Natural killer cell (primary cell): ENCODE measurements at regions of chr19 and their contacts with region 1.

Region 1: GRCh38 chr19:18192673-18193387 is at the start of gene MPV17L2:
- DNase-seq: peak; percentile 97 to 100
- ATAC-seq: peak; percentile 85 to 95 (median 86)
- H3K4me3 ChIP-seq: peak within 1 kb of the TSS; percentile 73
- H3K4me3 Mint-ChIP-seq: peak within 1 kb of the TSS; percentile 86
- H3K27ac ChIP-seq: peak within 1 kb of the TSS; percentile 83
- H3K27ac Mint-ChIP-seq: peak within 1 kb of the TSS; percentile 94 to 96
- H3K4me1 ChIP-seq: peaks cover 27% of the 10 kb centered on the region
- H3K4me1 Mint-ChIP-seq: peaks cover 26 to 29% of the 10 kb centered on the region in 2 donors
- H3K27me3 ChIP-seq: no peaks in the 10 kb centered on the region
- H3K27me3 Mint-ChIP-seq: no peaks in the 10 kb centered on the region
- CTCF ChIP-seq: no peak
- total RNA-seq, gene MPV17L2: 4.1 to 5.6 (median 4.5) TPM

Region 2: GRCh38 chr19:18135712-18136584 is 56.9 kb before region 1 on chr19:
- intact Hi-C with region 1: no loop called
- DNase-seq: no peak
- ATAC-seq: no peak
- H3K4me3 ChIP-seq: no peak overlapping the region
- H3K4me3 Mint-ChIP-seq: no peak overlapping the region
- H3K27ac ChIP-seq: no peak overlapping the region
- H3K27ac Mint-ChIP-seq: peak overlapping the region in 1 of 2 donors; percentile 64
- H3K4me1 ChIP-seq: no peaks in the 10 kb centered on the region
- H3K4me1 Mint-ChIP-seq: peaks cover 0 to 17% of the 10 kb centered on the region in 2 donors
- H3K27me3 ChIP-seq: no peaks in the 10 kb centered on the region
- H3K27me3 Mint-ChIP-seq: no peaks in the 10 kb centered on the region
- CTCF ChIP-seq: no peak

Region 3: GRCh38 chr19:18152444-18152816 is 40.4 kb before region 1 on chr19:
- intact Hi-C with region 1: loop called (anchors 1 kb)
- DNase-seq: peak; percentile 99 to 100
- ATAC-seq: peak; percentile 65 to 82 (median 67)
- H3K4me3 ChIP-seq: peak overlapping the region; percentile 69
- H3K4me3 Mint-ChIP-seq: peak overlapping the region; percentile 95
- H3K27ac ChIP-seq: peak overlapping the region; percentile 91
- H3K27ac Mint-ChIP-seq: peak overlapping the region; percentile 89 to 97
- H3K4me1 ChIP-seq: peaks cover 61% of the 10 kb centered on the region
- H3K4me1 Mint-ChIP-seq: peaks cover 41 to 69% of the 10 kb centered on the region in 2 donors
- H3K27me3 ChIP-seq: no peaks in the 10 kb centered on the region
- H3K27me3 Mint-ChIP-seq: peaks cover 0 to 2% of the 10 kb centered on the region in 2 donors
- CTCF ChIP-seq: peak; percentile 79

Region 4: DNA sequence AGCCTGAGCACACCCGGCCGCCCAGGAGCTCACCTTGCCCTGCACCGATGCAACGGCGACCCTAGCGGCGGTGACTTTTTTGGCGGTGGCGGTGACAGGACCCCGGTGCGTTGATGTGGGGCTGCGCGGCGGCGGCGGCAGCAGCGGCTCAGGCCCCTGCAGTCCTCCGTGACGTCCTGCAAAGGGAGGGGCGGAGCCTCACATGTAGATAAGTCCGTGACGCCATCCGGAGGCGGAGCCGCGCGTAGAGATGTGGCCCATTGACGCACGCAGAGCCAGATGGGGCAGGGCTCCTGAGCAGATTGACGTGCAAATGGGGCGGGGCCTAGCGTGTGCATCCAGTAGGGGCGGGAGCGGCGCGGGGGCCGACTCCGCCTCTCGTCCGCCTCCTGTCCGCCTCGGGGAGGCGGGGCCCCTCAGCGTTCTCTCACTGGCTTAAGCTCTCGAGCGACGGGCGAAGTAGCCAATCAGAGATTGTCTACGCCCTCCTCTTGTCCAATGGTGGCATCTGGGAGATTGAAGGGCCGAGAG is 11.1 kb after region 1 on chr19 and contains the start of gene RAB3A:
- intact Hi-C with region 1: loop called (anchors 1 kb)
- DNase-seq: peak; percentile 98 to 100
- ATAC-seq: peak; percentile 90 to 98 (median 91)
- H3K4me3 ChIP-seq: peak within 1 kb of the TSS; percentile 79
- H3K4me3 Mint-ChIP-seq: peak within 1 kb of the TSS; percentile 97
- H3K27ac ChIP-seq: peak within 1 kb of the TSS; percentile 81
- H3K27ac Mint-ChIP-seq: peak within 1 kb of the TSS; percentile 92 to 96
- H3K4me1 ChIP-seq: peaks cover 27% of the 10 kb centered on the region
- H3K4me1 Mint-ChIP-seq: peaks cover 23 to 32% of the 10 kb centered on the region in 2 donors
- H3K27me3 ChIP-seq: peaks cover 2% of the 10 kb centered on the region
- H3K27me3 Mint-ChIP-seq: peaks cover 4 to 9% of the 10 kb centered on the region in 2 donors
- CTCF ChIP-seq: no peak
- total RNA-seq, gene RAB3A: 5.2 to 7.8 (median 7.6) TPM

Region 5: DNA sequence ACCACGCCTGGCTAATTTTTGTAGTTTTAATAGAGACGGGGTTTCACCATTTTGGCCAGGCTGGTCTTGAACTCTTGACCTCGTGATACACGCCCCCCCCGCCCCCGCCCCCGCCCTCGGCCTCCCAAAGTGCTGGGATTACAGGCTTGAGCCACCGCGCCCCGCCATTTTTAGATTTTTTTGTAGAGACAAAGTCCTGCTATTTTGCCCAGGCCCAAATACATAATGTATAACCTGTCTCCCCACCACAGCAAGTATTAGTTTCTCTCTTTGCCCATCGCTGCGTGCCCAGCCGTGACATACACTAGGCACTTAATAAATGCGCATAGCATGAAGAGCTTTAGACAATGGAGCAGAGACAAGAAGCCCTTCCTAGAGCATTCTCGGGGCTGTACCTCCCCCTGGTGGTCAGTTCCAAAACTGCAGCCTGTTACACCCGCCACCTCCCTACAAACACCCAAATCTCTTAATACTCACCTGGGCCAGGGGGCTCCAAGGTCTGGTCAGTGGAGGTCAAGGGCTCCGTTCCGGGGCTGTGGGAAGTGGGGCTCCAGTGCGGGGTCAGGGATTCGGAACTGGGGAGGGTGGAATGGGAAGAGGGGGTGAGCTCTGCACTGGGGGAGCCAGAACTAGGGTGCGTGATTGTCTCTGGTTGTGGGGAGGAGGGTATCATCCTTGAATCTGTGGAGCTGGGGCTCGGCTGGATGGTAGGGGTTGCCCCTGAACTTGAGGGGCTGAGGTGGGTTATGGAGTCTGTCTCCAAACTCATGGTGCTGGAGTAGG is 58.9 kb after region 1 on chr19:
- intact Hi-C with region 1: loop called (anchors 1 kb)
- DNase-seq: peak; percentile 79 to 91
- ATAC-seq: peak; percentile 86 to 98 (median 88)
- H3K4me3 ChIP-seq: no peak overlapping the region
- H3K4me3 Mint-ChIP-seq: no peak overlapping the region
- H3K27ac ChIP-seq: no peak overlapping the region
- H3K27ac Mint-ChIP-seq: no peak overlapping the region
- H3K4me1 ChIP-seq: peaks cover 14% of the 10 kb centered on the region
- H3K4me1 Mint-ChIP-seq: peaks cover 0 to 5% of the 10 kb centered on the region in 2 donors
- H3K27me3 ChIP-seq: no peaks in the 10 kb centered on the region
- H3K27me3 Mint-ChIP-seq: peaks cover 16 to 25% of the 10 kb centered on the region in 2 donors
- CTCF ChIP-seq: peak; percentile 81

Region 6: DNA sequence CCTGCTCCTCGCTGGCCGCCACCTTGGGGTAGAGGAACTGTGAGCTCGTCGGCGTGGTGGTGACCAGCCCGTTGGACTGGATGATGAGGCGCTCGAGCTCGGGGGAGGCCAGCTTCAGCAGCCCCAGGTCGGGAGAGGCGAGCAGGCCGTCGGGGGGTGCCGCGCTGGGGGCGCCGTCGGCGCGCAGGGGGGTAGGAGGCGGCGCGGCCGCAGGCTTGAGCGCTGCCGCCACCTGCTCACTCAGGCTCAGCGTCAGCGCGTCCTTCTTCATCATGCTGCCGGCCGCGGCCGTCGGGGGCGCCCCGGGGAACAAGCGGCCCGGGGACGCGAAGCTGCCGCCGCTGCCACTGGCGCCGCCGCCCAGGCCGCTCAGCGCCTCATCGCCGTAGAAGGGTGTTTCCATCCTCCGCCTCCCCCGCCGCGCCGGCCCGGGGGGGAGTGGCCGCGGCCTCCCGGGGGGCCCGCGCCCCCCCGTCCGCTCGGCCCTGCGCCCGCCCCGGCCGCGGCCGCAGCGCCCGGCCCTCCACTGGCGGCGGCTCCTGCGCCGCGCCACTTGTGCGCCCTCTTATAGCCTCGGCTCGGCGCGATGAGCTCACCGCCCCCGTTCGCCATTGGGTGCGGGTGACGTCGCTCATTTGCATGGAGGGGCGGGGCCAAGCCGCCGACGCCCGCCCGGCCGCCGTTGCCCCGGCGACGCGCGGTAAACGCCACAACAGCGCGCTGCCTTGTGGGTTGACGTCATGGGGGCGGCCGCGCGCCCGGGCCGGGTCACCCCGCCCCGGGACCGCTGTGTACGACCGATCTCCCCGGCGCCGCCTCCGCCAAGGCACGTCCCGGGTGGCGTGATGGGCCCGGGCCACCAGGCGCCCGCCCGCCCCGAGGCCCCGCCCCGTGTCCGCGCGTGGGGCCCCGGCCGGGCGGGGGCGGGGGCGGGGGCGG is 88.5 kb after region 1 on chr19 and contains the start of gene JUND:
- intact Hi-C with region 1: loop called (anchors 5 kb)
- DNase-seq: peak; percentile 98 to 99
- ATAC-seq: peak; percentile 57 to 82 (median 67)
- H3K4me3 ChIP-seq: peak within 1 kb of the TSS; percentile 92
- H3K4me3 Mint-ChIP-seq: peak within 1 kb of the TSS; percentile 99
- H3K27ac ChIP-seq: peak within 1 kb of the TSS; percentile 100
- H3K27ac Mint-ChIP-seq: peak within 1 kb of the TSS; percentile 97 to 99
- H3K4me1 ChIP-seq: peaks cover 40% of the 10 kb centered on the region
- H3K4me1 Mint-ChIP-seq: peaks cover 38 to 52% of the 10 kb centered on the region in 2 donors
- H3K27me3 ChIP-seq: no peaks in the 10 kb centered on the region
- H3K27me3 Mint-ChIP-seq: peaks cover 0 to 6% of the 10 kb centered on the region in 2 donors
- CTCF ChIP-seq: no peak
- total RNA-seq, gene JUND: 1,182 to 2,122 (median 1,520) TPM

Region 7: DNA sequence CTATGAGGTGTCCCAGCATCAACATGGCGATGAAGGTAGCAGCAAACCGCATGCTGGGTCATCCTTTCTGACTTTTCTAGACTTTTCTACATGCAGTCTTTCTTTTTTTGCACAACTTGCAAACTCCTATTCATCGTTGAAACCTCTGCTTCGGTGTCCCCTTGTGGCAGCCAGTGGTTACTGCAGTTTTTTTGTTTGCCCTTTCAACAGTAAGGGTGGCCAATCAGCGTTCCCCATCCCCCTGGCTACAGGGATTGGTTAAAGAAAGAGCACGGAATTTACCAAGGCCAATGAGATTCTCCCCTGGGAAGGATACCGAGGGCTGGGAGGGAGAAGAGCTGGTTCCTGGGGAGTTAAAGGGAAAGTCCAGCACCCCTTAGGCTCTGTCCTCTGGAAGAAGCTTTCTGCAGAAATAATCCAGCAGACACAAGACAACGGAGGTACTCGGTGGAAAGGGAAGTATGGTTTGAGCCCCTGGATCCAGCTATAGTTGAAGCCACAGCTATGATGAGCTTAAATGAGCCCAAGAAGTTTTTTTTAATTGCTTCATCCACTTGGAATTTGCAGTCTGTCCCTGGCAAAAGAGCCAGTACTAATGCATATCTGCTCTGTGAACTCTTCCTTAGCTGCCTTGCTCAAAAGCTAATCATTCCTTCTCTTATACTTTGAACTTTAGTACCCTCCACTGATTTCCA is 135.7 kb after region 1 on chr19:
- intact Hi-C with region 1: loop called (anchors 1 kb)
- DNase-seq: peak; percentile 78 to 94
- ATAC-seq: peak; percentile 98 to 99 (median 98)
- H3K4me3 ChIP-seq: no peak overlapping the region
- H3K4me3 Mint-ChIP-seq: peak overlapping the region; percentile 45
- H3K27ac ChIP-seq: no peak overlapping the region
- H3K27ac Mint-ChIP-seq: peak overlapping the region; percentile 38 to 52
- H3K4me1 ChIP-seq: peaks cover 20% of the 10 kb centered on the region
- H3K4me1 Mint-ChIP-seq: peaks cover 15% of the 10 kb centered on the region in 2 donors
- H3K27me3 ChIP-seq: no peaks in the 10 kb centered on the region
- H3K27me3 Mint-ChIP-seq: no peaks in the 10 kb centered on the region
- CTCF ChIP-seq: peak; percentile 90

Region 8: GRCh38 chr19:18419195-18419698 is 226.4 kb after region 1 on chr19 and contains the start of gene SSBP4:
- intact Hi-C with region 1: loop called (anchors 5 kb)
- DNase-seq: peak; percentile 79 to 83
- ATAC-seq: peak; percentile 27 to 56 (median 54)
- H3K4me3 ChIP-seq: peak within 1 kb of the TSS; percentile 73
- H3K4me3 Mint-ChIP-seq: peak within 1 kb of the TSS; percentile 91
- H3K27ac ChIP-seq: peak within 1 kb of the TSS; percentile 89
- H3K27ac Mint-ChIP-seq: peak within 1 kb of the TSS; percentile 91 to 97
- H3K4me1 ChIP-seq: peaks cover 90% of the 10 kb centered on the region
- H3K4me1 Mint-ChIP-seq: peaks cover 73 to 89% of the 10 kb centered on the region in 2 donors
- H3K27me3 ChIP-seq: no peaks in the 10 kb centered on the region
- H3K27me3 Mint-ChIP-seq: no peaks in the 10 kb centered on the region
- CTCF ChIP-seq: peak; percentile 11
- total RNA-seq, gene SSBP4: 137 to 169 (median 158) TPM